ENCODE measurements at regions of chr2 and their contacts with region 1.

Region 1: DNA sequence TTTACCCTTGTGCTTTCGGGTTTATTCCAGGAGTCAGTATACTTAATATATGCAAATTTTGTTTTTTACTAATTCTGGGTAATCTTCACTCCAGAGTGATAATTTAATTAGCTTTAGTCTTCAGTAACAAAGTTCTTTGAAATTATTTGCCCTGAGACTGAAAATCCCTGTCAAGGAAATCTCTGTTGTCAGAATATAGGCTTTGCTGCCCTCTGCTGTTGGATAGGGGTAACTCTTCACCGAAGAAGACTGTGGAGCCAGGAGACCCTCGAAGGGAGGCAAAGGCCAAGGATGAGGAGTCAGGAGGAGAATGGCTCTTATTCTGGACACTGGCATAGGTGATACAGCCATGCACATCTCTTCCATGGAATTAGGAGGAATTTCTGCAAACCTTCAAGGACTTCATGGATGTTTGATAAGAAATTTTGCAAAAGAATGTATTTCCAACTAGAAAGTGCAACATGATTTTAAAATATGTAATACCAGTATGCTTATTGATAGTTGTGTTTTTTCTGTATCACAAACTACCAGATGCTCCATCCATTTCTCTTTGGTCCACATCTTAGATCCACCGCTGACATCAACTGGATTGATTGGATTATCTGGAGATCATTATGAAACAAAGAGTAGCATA is 182.3 kb downstream of the RDH14 start:
- DNase-seq: peak in 1 of 2 donors; percentile 51
- ATAC-seq: peak in 1 of 3 donors; percentile 61
- H3K4me3 ChIP-seq: no peak overlapping the region
- H3K4me3 Mint-ChIP-seq: no peak overlapping the region
- H3K27ac ChIP-seq: no peak overlapping the region
- H3K27ac Mint-ChIP-seq: no peak overlapping the region
- H3K4me1 ChIP-seq: no peaks in the 10 kb centered on the region
- H3K4me1 Mint-ChIP-seq: no peaks in the 10 kb centered on the region
- H3K27me3 ChIP-seq: no peaks in the 10 kb centered on the region
- H3K27me3 Mint-ChIP-seq: no peaks in the 10 kb centered on the region
- CTCF ChIP-seq: peak; percentile 58

Region 2: GRCh38 chr2:17646081-17646554 is 732.0 kb before region 1 on chr2:
- intact Hi-C with region 1: loop called (anchors 5 kb)
- DNase-seq: peak in 1 of 2 donors; percentile 68
- ATAC-seq: peak; percentile 66 to 81 (median 79)
- H3K4me3 ChIP-seq: no peak overlapping the region
- H3K4me3 Mint-ChIP-seq: no peak overlapping the region
- H3K27ac ChIP-seq: no peak overlapping the region
- H3K27ac Mint-ChIP-seq: no peak overlapping the region
- H3K4me1 ChIP-seq: no peaks in the 10 kb centered on the region
- H3K4me1 Mint-ChIP-seq: no peaks in the 10 kb centered on the region
- H3K27me3 ChIP-seq: no peaks in the 10 kb centered on the region
- H3K27me3 Mint-ChIP-seq: no peaks in the 10 kb centered on the region
- CTCF ChIP-seq: peak; percentile 90